Sigmoid colon (tissue), 7 donors: ENCODE measurements at regions of chr3 and their contacts with region 1.

Region 1: GRCh38 chr3:50542177-50543034 is 25.1 kb downstream of the C3orf18 start:
- DNase-seq: peak; percentile 80
- H3K4me3 ChIP-seq: no peak overlapping the region
- H3K27ac ChIP-seq: no peak overlapping the region
- H3K4me1 ChIP-seq: no peaks in the 10 kb centered on the region
- H3K27me3 ChIP-seq: no peaks in the 10 kb centered on the region
- CTCF ChIP-seq: peak; percentile 70 to 86 (median 81)
- EP300 ChIP-seq: no peak
- POLR2A ChIP-seq: no peak

Region 2: DNA sequence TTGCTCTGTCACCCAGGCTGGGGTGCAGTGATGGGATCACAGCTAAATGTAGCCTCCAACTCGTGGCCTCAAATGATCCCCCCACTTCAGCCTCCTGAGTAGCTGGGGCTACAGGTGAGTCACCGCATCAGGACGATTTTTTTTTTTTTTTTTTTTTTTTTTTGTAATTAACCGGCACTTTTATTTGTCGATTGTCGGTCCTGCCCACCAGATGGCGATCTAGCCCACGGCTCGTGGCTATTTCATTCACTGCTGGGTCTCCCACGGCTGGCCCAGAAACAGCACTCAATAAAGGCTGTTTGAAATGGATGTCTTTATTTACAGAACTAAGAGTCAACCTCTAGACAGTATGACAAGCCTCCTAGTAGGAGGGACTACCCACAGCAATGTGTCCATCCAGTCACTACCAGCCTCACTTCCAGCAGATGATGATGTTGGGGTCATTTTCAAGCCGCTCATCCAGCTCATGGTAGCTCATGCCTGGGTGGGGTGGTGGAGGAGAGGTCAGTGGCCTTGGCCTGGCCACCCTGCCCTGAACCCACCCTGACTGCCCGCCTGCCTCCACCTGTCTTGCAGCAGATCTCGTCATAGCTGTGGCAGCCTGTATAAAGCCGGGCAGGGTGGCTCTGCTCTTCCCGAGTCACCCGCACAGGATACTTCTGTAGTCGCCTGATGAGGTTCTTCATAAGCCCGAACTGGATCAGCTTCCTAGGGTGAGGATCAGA is 195.1 kb before region 1 on chr3:
- intact Hi-C with region 1: loop called (anchors 1 kb)
- DNase-seq: peak; percentile 83
- H3K4me3 ChIP-seq: no peak overlapping the region
- H3K27ac ChIP-seq: peak overlapping the region in 2 of 4 donors; percentile 39 to 54
- H3K4me1 ChIP-seq: peaks cover 0 to 40% (median 36%) of the 10 kb centered on the region in 4 donors
- H3K27me3 ChIP-seq: no peaks in the 10 kb centered on the region
- CTCF ChIP-seq: peak in 2 of 4 experiments; percentile 40 to 56
- EP300 ChIP-seq: no peak
- POLR2A ChIP-seq: no peak

Region 3: DNA sequence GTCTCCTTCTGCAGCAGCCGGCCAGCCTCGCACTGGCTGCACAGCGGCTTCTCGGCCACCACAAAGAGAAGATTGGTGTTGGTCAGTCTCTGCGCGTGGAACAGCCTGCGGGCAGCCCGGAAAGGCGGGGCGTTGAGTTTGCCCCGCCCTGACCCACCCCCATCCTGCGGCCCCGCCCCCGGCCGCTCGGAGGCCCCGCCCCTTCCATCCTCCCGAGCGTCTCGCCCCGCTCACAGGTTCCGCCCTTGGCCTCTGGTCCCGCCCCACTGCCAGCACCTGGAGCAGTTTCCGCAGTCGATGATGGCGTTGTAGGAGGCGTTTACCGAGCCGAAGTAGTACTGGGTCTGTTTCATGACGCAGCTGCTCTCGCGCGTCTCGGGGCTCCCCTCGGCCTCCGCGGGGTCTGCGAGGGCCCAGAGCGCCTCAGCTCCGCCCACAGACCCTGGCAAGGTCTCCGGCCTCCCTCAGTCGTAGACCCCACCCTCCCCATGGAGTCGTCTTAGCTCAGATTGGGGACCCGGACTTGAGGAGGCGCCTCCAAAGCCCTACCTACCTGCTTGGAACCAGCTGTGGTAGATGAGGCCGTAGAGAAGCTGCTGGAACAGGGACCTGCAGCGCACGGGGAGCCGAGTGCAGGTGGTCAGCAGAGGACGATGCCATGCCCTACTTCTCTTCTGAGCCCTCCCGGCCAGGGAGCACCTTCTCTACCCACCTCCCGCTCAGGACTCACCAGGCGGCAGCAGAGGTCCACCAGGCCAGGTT is 177.1 kb before region 1 on chr3:
- intact Hi-C with region 1: loop called (anchors 5 kb)
- DNase-seq: peak; percentile 93
- H3K4me3 ChIP-seq: peak overlapping the region; percentile 45 to 62 (median 50)
- H3K27ac ChIP-seq: peak overlapping the region; percentile 57 to 72 (median 68)
- H3K4me1 ChIP-seq: peaks cover 0 to 14% (median 13%) of the 10 kb centered on the region in 4 donors
- H3K27me3 ChIP-seq: peaks cover 0 to 15% (median 5%) of the 10 kb centered on the region in 3 donors
- CTCF ChIP-seq: no peak
- EP300 ChIP-seq: no peak
- POLR2A ChIP-seq: no peak

Region 4: DNA sequence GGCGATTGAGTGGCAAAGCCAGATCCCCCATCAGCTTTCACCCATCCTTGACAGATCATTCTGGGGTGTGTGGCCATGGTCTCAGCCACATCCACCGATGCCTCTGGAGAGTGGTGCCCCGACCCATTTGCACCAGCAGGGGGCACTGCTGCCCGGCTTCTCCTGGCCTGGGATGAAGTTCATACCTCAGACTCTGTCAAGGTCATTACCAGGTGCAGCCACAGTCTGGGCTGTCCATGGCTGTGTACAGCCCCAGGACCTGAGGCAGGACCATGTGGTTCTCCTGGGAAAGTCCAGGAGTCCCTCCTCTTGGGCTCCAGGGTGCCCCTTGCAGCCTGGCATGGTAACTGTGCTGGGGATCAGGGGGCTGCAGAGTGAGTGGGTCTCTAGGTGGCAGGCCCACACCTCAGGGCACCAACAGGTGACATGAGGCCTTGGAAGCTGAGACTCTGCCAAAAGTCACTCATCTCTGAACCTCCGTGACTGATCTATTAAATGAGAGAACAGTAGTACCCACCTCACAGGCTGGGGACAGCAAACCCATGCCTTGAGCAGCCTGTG is 106.2 kb before region 1 on chr3:
- intact Hi-C with region 1: loop called (anchors 1 kb)
- DNase-seq: no peak
- H3K4me3 ChIP-seq: no peak overlapping the region
- H3K27ac ChIP-seq: no peak overlapping the region
- H3K4me1 ChIP-seq: no peaks in the 10 kb centered on the region
- H3K27me3 ChIP-seq: no peaks in the 10 kb centered on the region
- CTCF ChIP-seq: peak; percentile 36 to 69 (median 46)
- EP300 ChIP-seq: no peak
- POLR2A ChIP-seq: no peak

Region 5: GRCh38 chr3:50587806-50588758 is 45.7 kb after region 1 on chr3:
- intact Hi-C with region 1: no loop called
- DNase-seq: no peak
- H3K4me3 ChIP-seq: no peak overlapping the region
- H3K27ac ChIP-seq: no peak overlapping the region
- H3K4me1 ChIP-seq: peaks cover 0 to 12% (median 6%) of the 10 kb centered on the region in 4 donors
- H3K27me3 ChIP-seq: no peaks in the 10 kb centered on the region
- CTCF ChIP-seq: no peak
- EP300 ChIP-seq: no peak
- POLR2A ChIP-seq: no peak